Mammary epithelial cell (primary cell): ENCODE measurements at regions of chr22 and their contacts with region 1.

Region 1: DNA sequence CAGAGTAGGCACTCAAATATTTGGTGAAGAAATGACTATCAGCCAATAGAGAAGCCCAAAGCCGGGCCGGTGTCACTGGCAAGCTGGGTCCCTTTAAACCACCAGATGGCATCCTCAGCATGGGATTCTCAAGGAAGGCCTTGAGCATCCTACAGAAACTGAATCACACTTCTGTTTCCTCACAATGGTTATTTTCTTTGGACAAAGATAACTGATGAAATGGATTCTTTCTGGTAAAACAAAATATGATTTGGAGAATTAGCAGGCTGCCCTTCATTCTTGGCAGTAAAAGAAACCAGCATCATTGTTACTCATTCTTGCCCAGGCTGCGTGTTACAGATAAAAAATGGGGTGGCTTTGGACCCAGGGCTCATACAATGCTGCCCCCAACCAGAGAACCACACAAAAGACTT is 30.3 kb upstream of the ASPHD2 start:
- DNase-seq: peak; percentile 55
- H3K4me3 ChIP-seq: no peak overlapping the region
- H3K27ac ChIP-seq: no peak overlapping the region
- H3K4me1 ChIP-seq: no peaks in the 10 kb centered on the region
- H3K27me3 ChIP-seq: no peaks in the 10 kb centered on the region
- CTCF ChIP-seq: peak; percentile 84

Region 2: GRCh38 chr22:26428515-26429457 is 30.0 kb after region 1 on chr22 and contains the start of gene ASPHD2:
- CTCF ChIA-PET with region 1: no interaction called
- dilution Hi-C with region 1: no loop called
- in situ Hi-C with region 1: no loop called
- intact Hi-C with region 1: loop called (anchors 2 kb)
- DNase-seq: peak; percentile 64
- H3K4me3 ChIP-seq: peak within 1 kb of the TSS; percentile 47 to 69 (median 65)
- H3K27ac ChIP-seq: peak within 1 kb of the TSS; percentile 11
- H3K4me1 ChIP-seq: peaks cover 7% of the 10 kb centered on the region
- H3K27me3 ChIP-seq: no peaks in the 10 kb centered on the region
- CTCF ChIP-seq: no peak
- total RNA-seq, gene ASPHD2: 6.1 to 16.5 TPM

Region 3: GRCh38 chr22:26665813-26666231 is 267.1 kb after region 1 on chr22:
- CTCF ChIA-PET with region 1: no interaction called
- dilution Hi-C with region 1: no loop called
- in situ Hi-C with region 1: no loop called
- intact Hi-C with region 1: loop called (anchors 1 kb)
- DNase-seq: no peak
- H3K4me3 ChIP-seq: no peak overlapping the region
- H3K27ac ChIP-seq: no peak overlapping the region
- H3K4me1 ChIP-seq: peaks cover 8% of the 10 kb centered on the region
- H3K27me3 ChIP-seq: no peaks in the 10 kb centered on the region
- CTCF ChIP-seq: no peak